Heart right ventricle (tissue), 16 donors: ENCODE measurements at regions of chr5 and their contacts with region 1.

Region 1: GRCh38 chr5:10607666-10608073 is 43.8 kb downstream of the ANKRD33B start:
- DNase-seq: peak in 1 of 2 donors; percentile 65
- ATAC-seq: peak; percentile 87 to 93 (median 89)
- H3K4me3 ChIP-seq: peak overlapping the region in 5 of 10 donors; percentile 5 to 11 (median 6)
- H3K27ac ChIP-seq: peak overlapping the region; percentile 34 to 90 (median 82)
- H3K4me1 ChIP-seq: peaks cover 4 to 39% (median 23%) of the 10 kb centered on the region in 9 donors
- H3K27me3 ChIP-seq: no peaks in the 10 kb centered on the region
- CTCF ChIP-seq: peak in 5 of 9 donors; percentile 11 to 51 (median 43)

Region 2: GRCh38 chr5:10501554-10502075 is 106.1 kb before region 1 on chr5:
- intact Hi-C with region 1: no loop called
- DNase-seq: no peak
- ATAC-seq: no peak
- H3K4me3 ChIP-seq: no peak overlapping the region
- H3K27ac ChIP-seq: no peak overlapping the region
- H3K4me1 ChIP-seq: peaks cover 0 to 20% (median 16%) of the 10 kb centered on the region in 9 donors
- H3K27me3 ChIP-seq: no peaks in the 10 kb centered on the region
- CTCF ChIP-seq: no peak

Region 3: GRCh38 chr5:10627160-10627701 is 19.6 kb after region 1 on chr5:
- intact Hi-C with region 1: loop called in 1 of 10 experiments (anchors 1 kb)
- DNase-seq: no peak
- ATAC-seq: peak in 5 of 8 donors; percentile 5 to 29 (median 17)
- H3K4me3 ChIP-seq: peak overlapping the region in 9 of 10 donors; percentile 6 to 37 (median 32)
- H3K27ac ChIP-seq: peak overlapping the region in 7 of 10 donors; percentile 3 to 69 (median 36)
- H3K4me1 ChIP-seq: peaks cover 9 to 48% (median 33%) of the 10 kb centered on the region in 9 donors
- H3K27me3 ChIP-seq: peaks cover 0 to 6% (median 0%) of the 10 kb centered on the region in 7 donors
- CTCF ChIP-seq: no peak

Region 4: DNA sequence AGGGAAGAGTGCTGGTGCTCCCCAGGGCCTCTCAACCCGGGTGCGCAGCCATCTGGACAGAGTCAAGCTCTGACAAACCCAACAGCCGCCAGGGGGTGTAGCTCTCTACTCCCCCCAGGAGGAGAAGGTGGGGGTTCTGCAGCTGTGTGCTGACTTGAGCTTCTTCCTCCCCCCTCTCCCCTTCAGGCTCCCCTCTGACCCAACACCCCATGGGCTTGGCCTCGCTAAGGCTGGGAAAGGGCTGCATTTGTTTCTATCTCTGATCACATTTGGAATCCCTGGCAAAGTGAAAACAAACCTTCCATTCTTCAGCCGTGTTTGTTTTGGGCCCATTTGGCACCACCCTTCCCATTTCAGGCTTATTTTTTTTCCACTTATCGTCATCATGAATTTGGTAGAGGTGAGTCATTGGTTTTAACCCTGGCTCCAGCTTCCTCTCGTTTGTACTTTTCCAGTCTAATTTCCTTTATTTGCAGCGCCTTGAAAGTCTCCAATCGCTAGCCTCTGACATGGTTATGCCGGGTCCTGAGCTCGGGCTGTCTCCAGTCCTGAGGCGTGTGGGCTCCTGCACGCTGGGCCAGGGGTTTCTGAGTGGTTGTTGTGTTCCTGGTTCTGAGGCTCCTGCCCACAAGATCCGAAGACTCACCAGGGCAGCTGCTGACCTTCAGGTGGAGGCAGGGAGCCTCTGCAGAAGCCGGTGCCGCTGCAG is 117.3 kb after region 1 on chr5:
- intact Hi-C with region 1: no loop called
- DNase-seq: peak; percentile 73 to 74
- ATAC-seq: peak; percentile 77 to 91 (median 88)
- H3K4me3 ChIP-seq: peak overlapping the region in 6 of 10 donors; percentile 2 to 27 (median 11)
- H3K27ac ChIP-seq: peak overlapping the region; percentile 8 to 86 (median 80)
- H3K4me1 ChIP-seq: peaks cover 0 to 53% (median 40%) of the 10 kb centered on the region in 9 donors
- H3K27me3 ChIP-seq: no peaks in the 10 kb centered on the region
- CTCF ChIP-seq: peak in 7 of 9 donors; percentile 35 to 64 (median 37)